Panc1 (cell line): ENCODE measurements at regions of chr5 and their contacts with region 1.

Region 1: DNA sequence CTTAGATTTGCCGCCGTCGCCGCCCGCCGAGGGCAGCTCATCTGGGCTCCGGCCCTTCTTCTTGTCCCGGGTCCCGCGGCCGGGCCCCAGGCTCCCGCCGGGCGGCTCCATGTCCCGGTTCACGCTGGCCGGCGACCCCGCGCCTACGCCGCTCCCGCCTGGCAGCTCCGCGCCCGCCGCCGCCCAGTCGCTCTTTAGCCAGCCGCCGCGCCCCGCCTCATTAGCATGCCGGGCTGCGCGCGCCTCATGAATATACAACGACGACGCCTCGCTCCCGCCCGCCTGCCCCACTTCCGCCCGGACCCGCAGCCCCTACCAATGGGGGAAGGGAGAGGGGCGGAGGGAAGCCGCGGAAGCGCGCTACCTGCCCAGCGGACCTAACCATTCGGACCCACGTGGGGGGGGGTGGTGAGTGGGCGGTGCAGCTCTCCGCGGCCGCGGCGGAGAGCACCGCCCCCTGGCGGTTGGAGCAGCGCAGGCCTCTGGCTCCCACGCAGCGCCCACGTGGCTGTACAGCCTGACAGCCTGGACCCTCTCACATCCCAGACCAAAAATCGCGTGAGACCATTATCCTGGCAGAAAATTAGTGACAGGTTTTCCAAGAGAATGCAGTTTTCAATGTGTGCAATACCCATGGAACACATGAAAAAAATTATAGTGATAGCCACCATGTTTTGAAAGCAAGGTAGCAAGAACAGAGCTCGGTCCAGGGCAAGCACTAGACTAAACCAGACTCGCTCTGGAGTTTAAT is at the start of gene DIAPH1:
- DNase-seq: peak; percentile 81
- ATAC-seq: peak; percentile 95
- H3K4me3 ChIP-seq: peak within 1 kb of the TSS; percentile 76 to 90
- H3K27ac ChIP-seq: peak within 1 kb of the TSS; percentile 83
- H3K4me1 ChIP-seq: peaks cover 30% of the 10 kb centered on the region
- H3K27me3 ChIP-seq: no peaks in the 10 kb centered on the region
- CTCF ChIP-seq: peak; percentile 98
- total RNA-seq, gene DIAPH1: 155 TPM

Region 2: DNA sequence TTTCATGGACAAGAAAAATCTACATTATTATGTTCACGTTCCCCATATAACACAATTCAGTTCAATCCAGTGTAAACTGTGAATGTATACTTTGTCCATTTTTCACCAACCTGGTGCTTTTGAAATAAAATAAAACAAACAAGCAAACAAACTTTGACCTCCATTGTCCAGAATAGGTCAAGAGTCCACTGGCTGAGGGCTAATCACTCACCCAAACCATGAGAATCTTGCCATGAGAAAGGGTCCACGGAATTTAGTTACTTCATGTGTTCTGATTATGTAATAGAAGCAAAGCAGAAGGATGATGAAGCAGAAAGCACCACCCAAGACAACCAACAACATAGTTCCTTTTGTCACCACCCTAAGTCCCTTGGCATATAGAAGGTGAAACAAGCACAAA is 28.9 kb before region 1 on chr5:
- CTCF ChIA-PET with region 1: interaction called, 79 read pairs
- POLR2A ChIA-PET with region 1: interaction called, 10 read pairs
- in situ Hi-C with region 1: no loop called
- intact Hi-C with region 1: loop called (anchors 1 kb)
- DNase-seq: no peak
- ATAC-seq: no peak
- H3K4me3 ChIP-seq: no peak overlapping the region
- H3K27ac ChIP-seq: no peak overlapping the region
- H3K4me1 ChIP-seq: no peaks in the 10 kb centered on the region
- H3K27me3 ChIP-seq: no peaks in the 10 kb centered on the region
- CTCF ChIP-seq: no peak

Region 3: DNA sequence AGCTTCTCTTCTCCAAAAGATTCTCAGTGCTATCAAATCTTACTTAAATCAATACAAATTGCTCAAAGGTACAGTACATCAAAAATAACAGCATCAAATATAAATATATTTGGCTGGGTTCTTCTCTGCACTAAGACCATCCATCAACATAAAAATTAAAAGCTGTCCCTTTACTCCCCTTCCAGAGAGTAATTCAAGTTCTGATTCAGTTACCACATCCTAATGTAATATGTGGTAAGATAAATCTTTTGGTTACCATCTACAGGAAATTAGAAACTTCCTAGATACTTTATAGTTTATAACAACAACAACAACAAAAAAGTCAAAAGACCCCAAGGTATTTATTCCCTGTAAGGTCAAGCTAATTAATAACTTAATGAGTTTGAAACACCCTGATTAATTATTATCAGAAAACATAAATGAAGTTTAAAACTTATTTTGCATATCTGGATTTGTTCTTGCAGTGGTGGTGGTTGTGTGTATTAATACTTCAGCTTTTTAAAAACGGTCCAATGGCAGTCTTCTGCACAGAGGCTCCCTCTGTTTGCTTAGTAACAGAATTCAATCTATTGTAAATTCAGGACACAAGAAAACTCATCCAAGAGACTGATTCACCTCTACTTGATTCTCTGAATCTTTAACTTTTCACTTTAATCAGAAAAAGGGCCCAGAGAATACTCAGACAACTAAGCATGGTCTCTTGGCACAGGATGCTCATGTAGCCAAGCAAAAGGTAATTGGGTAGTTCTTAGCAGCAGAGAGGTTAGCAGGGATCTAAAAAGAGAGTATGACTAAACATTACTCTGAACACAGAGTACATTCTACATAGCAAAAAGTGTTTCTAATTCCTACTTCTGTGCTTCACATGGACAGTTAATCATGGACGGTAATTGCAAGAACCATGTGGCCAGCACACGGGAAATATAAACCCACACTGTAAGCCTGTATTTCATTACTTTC is 20.3 kb before region 1 on chr5:
- CTCF ChIA-PET with region 1: interaction called, 79 read pairs
- POLR2A ChIA-PET with region 1: no interaction called
- in situ Hi-C with region 1: no loop called
- intact Hi-C with region 1: no loop called
- DNase-seq: no peak
- ATAC-seq: no peak
- H3K4me3 ChIP-seq: no peak overlapping the region
- H3K27ac ChIP-seq: no peak overlapping the region; the same call in 1 of the 2 replicates
- H3K4me1 ChIP-seq: peaks cover 10% of the 10 kb centered on the region; the same call in 1 of the 2 replicates
- H3K27me3 ChIP-seq: no peaks in the 10 kb centered on the region
- CTCF ChIP-seq: no peak

Region 4: GRCh38 chr5:141691867-141692532 is 73.0 kb after region 1 on chr5:
- CTCF ChIA-PET with region 1: no interaction called
- POLR2A ChIA-PET with region 1: no interaction called
- in situ Hi-C with region 1: no loop called
- intact Hi-C with region 1: no loop called
- DNase-seq: peak; percentile 50
- ATAC-seq: peak; percentile 93
- H3K4me3 ChIP-seq: peak overlapping the region; percentile 30 to 67
- H3K27ac ChIP-seq: no peak overlapping the region
- H3K4me1 ChIP-seq: no peaks in the 10 kb centered on the region
- H3K27me3 ChIP-seq: peaks cover 3% of the 10 kb centered on the region
- CTCF ChIP-seq: peak; percentile 98